ENCODE measurements at regions of chr14 and their contacts with region 1.

Region 1: DNA sequence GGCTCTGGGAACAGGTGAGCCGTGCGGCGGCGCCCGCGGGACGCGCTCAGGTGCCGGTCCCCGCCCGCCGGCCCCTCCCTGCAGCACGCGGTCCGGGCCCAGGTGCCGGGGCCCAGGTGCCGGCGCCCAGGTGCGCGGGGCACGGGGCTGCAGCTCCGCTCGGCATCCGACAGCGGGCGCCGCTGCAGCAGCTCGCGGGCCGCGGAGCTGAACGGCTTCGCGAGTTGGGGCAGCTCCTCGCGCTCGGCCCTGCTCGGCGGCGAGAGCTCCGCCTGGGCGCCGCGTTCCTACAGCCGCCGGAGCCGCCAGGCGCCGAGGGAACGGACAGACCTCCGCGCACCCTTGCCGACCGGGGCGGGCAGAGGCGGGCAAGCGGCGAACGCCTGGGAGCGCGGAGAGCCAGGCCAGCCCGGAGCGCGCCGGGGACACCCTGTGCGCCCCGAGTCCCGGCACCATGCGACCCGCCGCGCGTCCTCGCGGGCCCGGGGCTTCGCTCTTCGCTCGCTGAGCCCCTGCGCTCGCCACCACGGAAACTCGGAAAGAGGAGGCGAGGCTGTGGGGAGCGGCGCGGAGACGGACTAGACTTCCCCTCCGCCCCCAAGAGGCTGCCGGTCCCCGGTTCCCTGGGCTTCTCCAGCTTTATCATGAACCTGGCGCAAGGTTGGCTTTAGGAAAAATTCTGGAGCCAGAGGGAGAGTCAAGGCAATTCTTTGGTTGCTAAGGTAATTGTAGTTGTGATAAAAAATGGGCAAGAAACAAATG is at the start of gene RGS6:
- DNase-seq: peak; percentile 72
- ATAC-seq: peak; percentile 93
- total RNA-seq, gene RGS6: 26.0 TPM

Region 2: DNA sequence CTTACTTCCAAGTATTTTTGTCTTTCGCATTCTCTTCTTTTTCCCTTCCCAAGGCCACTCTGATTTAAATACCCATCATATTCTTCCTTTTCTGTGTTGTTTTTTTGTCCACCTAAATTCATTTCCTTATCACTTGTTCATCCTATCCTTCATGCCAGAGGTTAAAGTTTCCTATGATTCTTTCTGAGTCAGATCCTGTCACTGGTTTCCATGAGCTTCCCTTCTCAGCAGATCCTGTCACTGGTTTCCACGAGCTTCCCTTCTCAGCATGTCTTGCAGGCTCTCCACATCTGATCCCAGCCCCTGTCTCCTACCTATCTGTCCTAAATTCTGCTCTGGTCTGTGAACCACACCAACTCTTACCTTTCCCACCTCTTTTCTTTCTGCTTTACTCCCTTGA is 312.0 kb before region 1 on chr14:
- intact Hi-C with region 1: no loop called
- DNase-seq: no peak
- ATAC-seq: no peak

Region 3: DNA sequence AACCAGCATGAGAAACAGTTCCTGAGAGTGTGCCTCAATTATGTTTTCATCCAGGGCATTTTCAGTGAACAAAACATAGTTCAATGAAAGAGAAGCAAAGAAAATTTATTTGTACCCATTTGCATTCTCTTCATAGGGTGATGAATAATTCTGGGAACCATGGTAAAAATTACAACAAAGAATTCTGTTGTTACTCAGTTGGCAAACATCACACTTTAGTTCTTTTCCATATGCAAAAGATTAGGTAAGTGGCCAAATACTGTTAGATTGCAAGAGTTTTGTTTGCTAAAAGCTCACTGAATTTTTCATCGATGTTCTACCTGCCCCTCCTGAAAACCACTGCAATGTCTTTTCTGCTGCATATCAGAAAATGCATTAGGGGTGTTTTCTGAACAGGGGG is 132.6 kb before region 1 on chr14:
- intact Hi-C with region 1: no loop called
- DNase-seq: no peak
- ATAC-seq: no peak

Region 4: GRCh38 chr14:71863064-71863463 is 69.3 kb before region 1 on chr14:
- intact Hi-C with region 1: no loop called
- DNase-seq: no peak
- ATAC-seq: no peak

Region 5: GRCh38 chr14:72023722-72024407 is 91.5 kb after region 1 on chr14:
- intact Hi-C with region 1: loop called (anchors 5 kb)
- DNase-seq: no peak
- ATAC-seq: peak; percentile 71

Region 6: GRCh38 chr14:72291908-72292688 is 359.7 kb after region 1 on chr14:
- intact Hi-C with region 1: loop called (anchors 5 kb)
- DNase-seq: no peak
- ATAC-seq: peak; percentile 86

Region 7: GRCh38 chr14:72810201-72810600 is 877.8 kb after region 1 on chr14:
- intact Hi-C with region 1: no loop called
- DNase-seq: no peak
- ATAC-seq: no peak